ENCODE measurements at regions of chr7 and their contacts with region 1.

Region 1: DNA sequence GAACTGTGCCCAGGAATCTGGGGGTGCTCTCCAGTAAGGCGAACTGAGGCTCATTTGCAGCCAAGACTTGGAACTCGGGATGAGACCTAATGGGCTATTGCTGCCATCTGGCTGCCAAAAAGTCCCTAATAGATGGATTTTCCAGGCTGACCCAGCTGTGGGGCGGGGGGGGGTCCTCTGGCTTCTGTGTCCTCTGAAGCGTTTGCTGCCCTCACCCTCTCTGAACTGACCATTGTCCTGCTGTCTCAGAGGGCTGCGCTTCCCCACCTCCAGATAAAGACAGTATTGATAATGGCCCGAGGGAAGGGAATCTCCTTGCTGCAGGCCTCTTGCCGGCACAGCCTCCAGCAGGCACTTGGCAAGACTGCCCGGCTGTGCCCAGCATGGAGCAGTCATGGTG is 46.6 kb downstream of the CLEC2L start:
- DNase-seq: no peak
- ATAC-seq: no peak
- H3K4me3 ChIP-seq: no peak overlapping the region
- H3K27ac ChIP-seq: peak overlapping the region in 3 of 4 donors; percentile 3 to 38 (median 7)
- H3K4me1 ChIP-seq: peaks cover 16 to 19% of the 10 kb centered on the region in 2 donors
- H3K27me3 ChIP-seq: no peaks in the 10 kb centered on the region
- CTCF ChIP-seq: peak in 2 of 5 experiments; percentile 11 to 30
- POLR2A ChIP-seq: no peak

Region 2: DNA sequence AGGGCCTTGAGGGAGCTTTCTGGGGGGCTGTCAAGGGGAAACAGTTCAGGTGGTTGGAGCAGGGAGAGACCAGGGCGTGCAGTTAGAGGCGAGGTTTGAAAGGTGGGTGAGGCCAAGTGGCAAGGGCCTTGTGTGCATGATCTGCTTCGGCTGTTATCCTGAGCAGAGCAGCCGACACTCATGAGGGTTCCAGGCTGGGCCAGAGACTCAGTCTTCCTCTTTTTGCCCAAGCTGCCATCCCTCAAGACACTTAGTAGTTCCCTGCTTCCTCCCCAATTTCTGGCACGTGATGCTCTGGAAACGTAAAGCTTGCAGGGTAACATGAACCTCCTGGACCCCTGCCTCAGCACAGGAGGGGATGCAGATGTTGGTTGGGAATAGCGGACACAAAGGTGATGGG is 130.7 kb before region 1 on chr7:
- in situ Hi-C with region 1: no loop called
- intact Hi-C with region 1: loop called (anchors 5 kb)
- DNase-seq: no peak
- ATAC-seq: no peak
- H3K4me3 ChIP-seq: no peak overlapping the region
- H3K27ac ChIP-seq: no peak overlapping the region
- H3K4me1 ChIP-seq: peaks cover 2 to 3% of the 10 kb centered on the region in 2 donors
- H3K27me3 ChIP-seq: no peaks in the 10 kb centered on the region
- CTCF ChIP-seq: no peak
- POLR2A ChIP-seq: no peak

Region 3: GRCh38 chr7:139505563-139505962 is 64.6 kb before region 1 on chr7:
- in situ Hi-C with region 1: no loop called
- intact Hi-C with region 1: loop called (anchors 1 kb)
- DNase-seq: no peak
- ATAC-seq: no peak
- H3K4me3 ChIP-seq: no peak overlapping the region
- H3K27ac ChIP-seq: no peak overlapping the region
- H3K4me1 ChIP-seq: no peaks in the 10 kb centered on the region
- H3K27me3 ChIP-seq: no peaks in the 10 kb centered on the region
- CTCF ChIP-seq: no peak
- POLR2A ChIP-seq: no peak

Region 4: GRCh38 chr7:139777948-139778841 is 208.1 kb after region 1 on chr7 and contains the start of gene HIPK2:
- in situ Hi-C with region 1: no loop called
- intact Hi-C with region 1: no loop called
- DNase-seq: peak; percentile 54 to 71
- ATAC-seq: peak; percentile 57 to 69
- H3K4me3 ChIP-seq: peak within 1 kb of the TSS; percentile 81 to 91 (median 86)
- H3K27ac ChIP-seq: peak within 1 kb of the TSS; percentile 91 to 99 (median 96)
- H3K4me1 ChIP-seq: peaks cover 30 to 32% of the 10 kb centered on the region in 2 donors
- H3K27me3 ChIP-seq: no peaks in the 10 kb centered on the region
- CTCF ChIP-seq: no peak
- POLR2A ChIP-seq: peak in 1 of 2 donors; percentile 55
- total RNA-seq, gene HIPK2: 30.5 to 77.4 (median 58.9) TPM